PC-3 (cell line): ENCODE measurements at regions of chr4 and their contacts with region 1.

Region 1: GRCh38 chr4:90443231-90443630 is 316.0 kb downstream of the CCSER1 start:
- DNase-seq: peak; percentile 81
- ATAC-seq: peak; percentile 83
- H3K4me3 ChIP-seq: peak overlapping the region; percentile 31; the same call in 1 of the 2 replicates
- H3K27ac ChIP-seq: peak overlapping the region; percentile 93
- H3K4me1 ChIP-seq: peaks cover 61% of the 10 kb centered on the region
- H3K27me3 ChIP-seq: no peaks in the 10 kb centered on the region
- CTCF ChIP-seq: no peak

Region 2: GRCh38 chr4:90061881-90062280 is 381.4 kb before region 1 on chr4:
- CTCF ChIA-PET with region 1: no interaction called
- POLR2A ChIA-PET with region 1: no interaction called
- intact Hi-C with region 1: no loop called
- DNase-seq: peak; percentile 16
- ATAC-seq: no peak
- H3K4me3 ChIP-seq: no peak overlapping the region
- H3K27ac ChIP-seq: no peak overlapping the region
- H3K4me1 ChIP-seq: no peaks in the 10 kb centered on the region
- H3K27me3 ChIP-seq: peaks cover 8% of the 10 kb centered on the region; the same call in 1 of the 2 replicates
- CTCF ChIP-seq: no peak

Region 3: DNA sequence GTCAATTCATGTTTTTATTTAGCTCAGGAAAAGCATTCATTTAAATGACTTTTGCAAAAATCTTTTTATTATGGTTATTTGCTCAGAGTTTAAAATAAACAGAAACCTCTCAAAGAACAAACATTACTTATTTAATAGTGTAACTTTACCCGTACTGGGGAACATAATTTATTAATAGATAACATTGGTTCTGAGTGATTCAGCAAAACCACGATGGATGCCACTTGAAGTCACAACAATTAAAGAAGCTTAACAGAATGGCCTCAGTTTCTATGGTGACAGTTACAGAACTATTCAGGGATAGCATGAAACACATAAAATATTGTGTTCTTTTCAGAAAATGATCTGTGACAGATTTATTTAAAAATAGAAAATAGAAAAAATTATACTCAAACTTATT is 52.7 kb after region 1 on chr4:
- CTCF ChIA-PET with region 1: no interaction called
- POLR2A ChIA-PET with region 1: no interaction called
- intact Hi-C with region 1: loop called (anchors 2 kb)
- DNase-seq: peak; percentile 73
- ATAC-seq: peak; percentile 93
- H3K4me3 ChIP-seq: no peak overlapping the region
- H3K27ac ChIP-seq: peak overlapping the region; percentile 85
- H3K4me1 ChIP-seq: peaks cover 18% of the 10 kb centered on the region
- H3K27me3 ChIP-seq: no peaks in the 10 kb centered on the region
- CTCF ChIP-seq: no peak

Region 4: DNA sequence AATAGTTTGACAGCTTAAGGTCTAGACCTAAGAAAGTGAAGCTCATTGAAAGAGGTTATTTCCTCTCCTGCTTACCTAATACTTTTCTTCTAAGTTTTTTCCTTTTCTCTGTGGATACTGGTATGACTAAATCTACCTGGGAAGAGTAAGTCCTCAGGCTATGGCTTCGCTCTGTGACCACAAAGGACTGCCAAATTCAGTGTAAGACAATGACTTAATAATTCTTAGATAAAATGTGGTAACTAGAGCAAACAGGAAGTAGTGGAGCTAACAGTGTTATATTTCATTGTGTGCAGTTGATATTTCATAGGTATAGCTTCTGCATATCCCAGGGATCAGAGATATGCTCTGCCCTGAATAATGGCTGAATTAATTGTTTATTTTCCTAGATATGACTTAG is 102.9 kb after region 1 on chr4:
- CTCF ChIA-PET with region 1: no interaction called
- POLR2A ChIA-PET with region 1: no interaction called
- intact Hi-C with region 1: loop called (anchors 1 kb)
- DNase-seq: peak; percentile 80
- ATAC-seq: peak; percentile 97
- H3K4me3 ChIP-seq: no peak overlapping the region
- H3K27ac ChIP-seq: 0 out of 2 replicates have a peak overlapping the region, but pooled peaks have one; percentile 24
- H3K4me1 ChIP-seq: peaks cover 16% of the 10 kb centered on the region
- H3K27me3 ChIP-seq: no peaks in the 10 kb centered on the region
- CTCF ChIP-seq: no peak